Sigmoid colon (tissue), 7 donors: ENCODE measurements at regions of chr3 and their contacts with region 1.

Region 1: DNA sequence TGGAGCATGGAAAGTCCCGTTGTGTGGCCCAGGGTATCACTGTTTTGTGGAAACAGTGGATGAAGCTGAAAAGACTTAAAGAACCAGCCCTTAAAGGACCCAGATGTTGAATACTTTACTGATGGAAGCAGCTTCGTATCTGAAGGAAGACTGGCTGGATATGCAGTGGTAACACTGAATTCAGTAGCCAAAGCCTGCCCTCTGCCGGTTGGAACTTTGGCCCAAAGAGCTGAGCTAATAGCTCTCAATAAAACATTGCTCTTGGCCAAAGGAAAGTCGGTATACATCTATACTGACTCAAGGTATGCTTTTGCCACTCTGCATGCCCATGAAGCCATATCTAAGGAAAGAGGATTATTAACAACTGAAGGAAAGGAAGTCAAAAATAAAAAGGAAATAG is 885.4 kb downstream of the PDCD6IP start:
- DNase-seq: no peak
- H3K4me3 ChIP-seq: no peak overlapping the region
- H3K27ac ChIP-seq: no peak overlapping the region
- H3K4me1 ChIP-seq: no peaks in the 10 kb centered on the region
- H3K27me3 ChIP-seq: no peaks in the 10 kb centered on the region
- CTCF ChIP-seq: peak in 3 of 4 experiments; percentile 33 to 35 (median 34)
- EP300 ChIP-seq: no peak
- POLR2A ChIP-seq: no peak

Region 2: GRCh38 chr3:33883538-33883950 is 800.3 kb before region 1 on chr3:
- intact Hi-C with region 1: loop called (anchors 5 kb)
- DNase-seq: no peak
- H3K4me3 ChIP-seq: peak overlapping the region in 2 of 4 donors; percentile 15 to 24
- H3K27ac ChIP-seq: no peak overlapping the region
- H3K4me1 ChIP-seq: peaks cover 0 to 7% (median 6%) of the 10 kb centered on the region in 4 donors
- H3K27me3 ChIP-seq: no peaks in the 10 kb centered on the region
- CTCF ChIP-seq: peak; percentile 24 to 78 (median 74)
- EP300 ChIP-seq: no peak
- POLR2A ChIP-seq: no peak

Region 3: DNA sequence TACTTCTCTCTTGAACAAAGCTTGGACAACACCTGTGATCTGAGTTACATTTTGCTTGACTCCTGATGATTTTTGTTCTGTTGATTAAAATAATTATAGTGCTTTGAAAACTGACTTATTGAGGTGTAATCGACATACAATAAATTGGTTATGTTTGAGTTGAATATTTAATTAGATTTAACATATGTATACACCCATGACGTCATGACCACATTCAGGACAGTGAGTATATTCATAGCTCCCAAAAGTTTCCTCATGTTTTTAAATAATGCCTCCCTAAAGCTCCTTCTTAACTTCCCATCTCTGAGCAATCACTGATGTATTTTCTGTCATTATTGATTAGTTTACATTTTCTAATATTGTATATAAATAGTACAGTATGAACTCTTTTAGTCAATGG is 84.3 kb before region 1 on chr3:
- intact Hi-C with region 1: no loop called
- DNase-seq: no peak
- H3K4me3 ChIP-seq: no peak overlapping the region
- H3K27ac ChIP-seq: no peak overlapping the region
- H3K4me1 ChIP-seq: no peaks in the 10 kb centered on the region
- H3K27me3 ChIP-seq: no peaks in the 10 kb centered on the region
- CTCF ChIP-seq: no peak
- EP300 ChIP-seq: no peak
- POLR2A ChIP-seq: no peak

Region 4: DNA sequence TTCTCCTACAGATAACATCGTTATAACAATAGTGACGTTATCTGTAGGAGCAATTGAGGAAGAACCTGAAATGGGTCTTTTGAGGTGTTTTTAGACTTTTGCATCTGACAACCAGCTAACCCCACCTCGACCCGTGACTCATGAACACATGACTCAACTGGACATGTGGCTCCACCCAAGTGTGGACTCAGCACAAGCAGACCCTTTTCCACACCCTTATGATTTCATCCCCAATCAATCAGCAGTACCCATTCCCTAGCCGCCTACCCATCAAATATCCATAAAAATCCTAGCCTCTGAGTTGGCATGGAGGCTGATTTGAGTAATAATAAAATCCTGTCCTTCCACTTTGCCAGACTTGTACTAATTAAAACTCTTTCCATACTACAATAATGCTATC is 1210.9 kb after region 1 on chr3:
- intact Hi-C with region 1: no loop called
- DNase-seq: no peak
- H3K4me3 ChIP-seq: no peak overlapping the region
- H3K27ac ChIP-seq: no peak overlapping the region
- H3K4me1 ChIP-seq: no peaks in the 10 kb centered on the region
- H3K27me3 ChIP-seq: no peaks in the 10 kb centered on the region
- CTCF ChIP-seq: no peak
- EP300 ChIP-seq: no peak
- POLR2A ChIP-seq: no peak